PC-3 (cell line): ENCODE measurements at regions of chr1 and their contacts with region 1.

Region 1: DNA sequence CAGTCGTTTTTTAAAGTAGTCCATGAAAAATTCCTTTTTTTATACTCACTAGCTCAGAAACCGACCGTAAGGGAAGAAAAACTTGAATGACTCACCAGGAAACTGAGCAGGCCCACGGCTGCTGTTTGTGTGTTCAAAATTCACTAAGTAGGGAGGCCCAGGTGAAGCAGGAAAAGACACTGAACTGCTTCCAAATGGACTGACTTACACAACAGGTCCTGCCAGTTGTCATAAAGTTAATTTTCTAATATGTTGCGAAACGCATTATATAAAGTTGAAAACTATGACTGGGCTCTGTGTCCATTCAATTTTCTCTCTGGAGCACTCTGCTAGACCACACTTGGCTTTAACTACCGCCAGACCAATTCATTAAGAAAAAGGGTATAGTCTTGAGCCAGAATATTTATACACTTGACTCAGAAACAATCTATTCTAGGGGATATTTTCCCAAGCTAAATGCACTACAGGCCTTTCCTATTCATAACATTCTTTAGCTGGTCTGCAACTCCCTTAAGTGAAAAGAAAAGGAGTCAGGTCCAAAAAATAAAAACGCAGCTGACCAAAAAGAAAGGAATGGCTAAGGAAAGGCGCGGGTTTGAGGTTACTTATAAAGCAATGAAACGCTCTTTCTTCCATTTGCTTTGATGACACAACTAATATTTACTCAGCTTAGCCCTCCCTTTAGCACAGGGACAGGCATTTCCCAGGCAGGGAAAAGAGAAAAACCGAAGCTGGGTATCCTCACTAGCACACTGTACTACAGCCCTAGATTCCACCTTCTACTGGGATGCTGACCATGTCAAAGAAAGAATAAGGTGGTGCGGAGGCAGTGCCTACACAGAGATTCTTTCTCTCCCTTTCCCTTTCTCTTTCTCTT is 306.3 kb upstream of the ESRRG start:
- DNase-seq: peak; percentile 99
- ATAC-seq: peak; percentile 94
- H3K4me3 ChIP-seq: peak overlapping the region; percentile 55
- H3K27ac ChIP-seq: peak overlapping the region; percentile 91
- H3K4me1 ChIP-seq: peaks cover 46% of the 10 kb centered on the region
- H3K27me3 ChIP-seq: no peaks in the 10 kb centered on the region
- CTCF ChIP-seq: no peak

Region 2: DNA sequence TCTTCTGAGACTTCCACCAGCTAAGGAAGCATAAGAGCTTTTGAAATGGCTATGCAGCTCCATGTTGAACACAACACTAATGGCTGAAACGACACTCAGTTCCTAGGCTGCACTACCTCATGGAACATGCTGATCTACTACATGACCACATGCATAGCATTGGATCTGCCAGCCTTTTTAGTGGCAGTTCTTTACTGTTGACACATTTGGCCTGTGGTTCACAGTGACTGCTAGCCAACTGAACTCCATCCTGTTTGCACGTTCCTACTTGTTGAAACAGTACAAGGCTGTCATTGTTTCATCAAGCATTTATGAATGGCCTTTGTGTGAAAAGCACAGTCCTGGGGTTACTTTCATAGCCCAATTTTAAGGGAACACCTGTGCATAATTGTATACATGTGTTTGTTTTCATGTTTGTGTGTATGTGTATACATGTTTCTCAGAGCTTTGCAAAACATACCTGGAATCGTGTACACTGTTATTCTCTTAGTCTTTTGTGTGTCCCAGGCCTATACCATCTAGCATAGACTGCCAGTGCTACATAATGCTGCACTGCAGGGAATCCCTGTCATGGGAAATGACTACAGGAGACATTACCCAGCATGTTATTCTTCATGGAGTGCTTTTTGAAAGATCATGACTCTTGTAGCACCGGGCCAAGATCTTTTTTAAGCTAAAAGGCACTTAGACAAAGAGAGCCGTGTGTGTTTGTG is 126.7 kb before region 1 on chr1:
- CTCF ChIA-PET with region 1: no interaction called
- POLR2A ChIA-PET with region 1: no interaction called
- intact Hi-C with region 1: loop called (anchors 5 kb)
- DNase-seq: peak; percentile 84
- ATAC-seq: peak; percentile 82
- H3K4me3 ChIP-seq: no peak overlapping the region
- H3K27ac ChIP-seq: peak overlapping the region; percentile 41
- H3K4me1 ChIP-seq: peaks cover 19% of the 10 kb centered on the region
- H3K27me3 ChIP-seq: no peaks in the 10 kb centered on the region
- CTCF ChIP-seq: no peak

Region 3: DNA sequence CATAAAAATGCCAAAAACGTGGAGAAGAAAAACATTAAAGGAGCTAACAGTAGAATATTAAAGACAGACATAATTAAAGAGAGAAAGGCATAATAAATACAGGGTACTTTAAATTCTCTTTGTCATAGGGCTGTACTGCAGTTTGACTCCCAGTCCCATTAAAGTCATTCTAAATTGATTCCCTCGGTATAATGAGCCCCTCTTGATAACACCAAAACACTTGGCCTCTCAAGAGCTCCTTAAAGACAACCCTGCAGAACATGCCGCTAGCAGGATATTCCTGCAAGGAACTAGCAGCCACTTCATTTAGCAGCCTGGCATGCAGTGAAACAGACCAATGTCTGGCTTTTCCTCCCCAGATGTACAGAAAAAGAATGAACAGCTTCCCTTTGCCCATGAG is 32.5 kb before region 1 on chr1:
- CTCF ChIA-PET with region 1: no interaction called
- POLR2A ChIA-PET with region 1: no interaction called
- intact Hi-C with region 1: loop called (anchors 1 kb)
- DNase-seq: no peak
- ATAC-seq: no peak
- H3K4me3 ChIP-seq: no peak overlapping the region
- H3K27ac ChIP-seq: no peak overlapping the region
- H3K4me1 ChIP-seq: no peaks in the 10 kb centered on the region
- H3K27me3 ChIP-seq: no peaks in the 10 kb centered on the region
- CTCF ChIP-seq: no peak

Region 4: DNA sequence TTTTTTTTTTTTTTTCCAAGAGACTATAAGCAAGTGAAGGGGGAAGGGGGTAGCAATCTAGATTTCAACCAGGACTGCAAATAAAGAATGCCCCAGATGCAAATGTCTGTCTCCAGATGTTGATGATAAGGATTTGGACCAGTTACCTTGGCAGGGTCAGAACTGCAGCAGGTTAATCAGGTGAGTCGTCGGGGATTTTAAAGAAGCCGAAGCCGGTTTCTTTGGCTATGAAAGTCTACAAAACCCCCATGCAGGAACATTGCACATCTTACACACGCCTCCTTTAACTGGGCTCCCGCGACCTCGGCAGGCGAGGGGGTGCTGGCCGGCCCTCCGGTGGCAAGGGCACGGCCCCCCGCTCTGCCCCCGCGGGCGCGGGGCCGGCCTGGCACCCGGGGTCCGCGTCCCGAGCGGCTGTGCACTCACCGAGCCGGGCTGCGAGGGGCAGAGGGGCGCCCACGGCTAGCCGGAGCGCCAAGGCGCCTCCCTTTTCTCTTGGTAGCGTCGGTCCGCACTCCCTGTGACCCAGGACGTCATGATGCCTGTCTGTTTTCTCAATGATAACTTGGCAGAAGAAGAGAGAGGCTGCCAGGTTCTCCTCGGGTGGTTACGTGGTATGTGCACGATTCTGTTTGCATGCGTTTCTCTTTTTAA is 60.0 kb after region 1 on chr1:
- CTCF ChIA-PET with region 1: no interaction called
- POLR2A ChIA-PET with region 1: no interaction called
- intact Hi-C with region 1: loop called (anchors 1 kb)
- DNase-seq: peak; percentile 82
- ATAC-seq: peak; percentile 90
- H3K4me3 ChIP-seq: peak overlapping the region; percentile 84
- H3K27ac ChIP-seq: peak overlapping the region; percentile 54
- H3K4me1 ChIP-seq: peaks cover 17% of the 10 kb centered on the region
- H3K27me3 ChIP-seq: no peaks in the 10 kb centered on the region
- CTCF ChIP-seq: no peak

Region 5: GRCh38 chr1:217134857-217135568 is 105.5 kb after region 1 on chr1:
- CTCF ChIA-PET with region 1: no interaction called
- POLR2A ChIA-PET with region 1: no interaction called
- intact Hi-C with region 1: no loop called
- DNase-seq: peak; percentile 38
- ATAC-seq: peak; percentile 66
- H3K4me3 ChIP-seq: peak overlapping the region; percentile 69
- H3K27ac ChIP-seq: no peak overlapping the region
- H3K4me1 ChIP-seq: no peaks in the 10 kb centered on the region; the same call in 1 of the 2 replicates
- H3K27me3 ChIP-seq: peaks cover 19% of the 10 kb centered on the region; the same call in 1 of the 2 replicates
- CTCF ChIP-seq: no peak

Region 6: GRCh38 chr1:217275655-217276398 is 246.3 kb after region 1 on chr1:
- CTCF ChIA-PET with region 1: no interaction called
- POLR2A ChIA-PET with region 1: no interaction called
- intact Hi-C with region 1: loop called (anchors 1 kb)
- DNase-seq: peak; percentile 96
- ATAC-seq: peak; percentile 67
- H3K4me3 ChIP-seq: peak overlapping the region; percentile 50
- H3K27ac ChIP-seq: peak overlapping the region; percentile 92
- H3K4me1 ChIP-seq: peaks cover 48% of the 10 kb centered on the region
- H3K27me3 ChIP-seq: no peaks in the 10 kb centered on the region
- CTCF ChIP-seq: no peak

Region 7: GRCh38 chr1:217333939-217334338 is 304.4 kb after region 1 on chr1:
- CTCF ChIA-PET with region 1: interaction called, 8 read pairs
- POLR2A ChIA-PET with region 1: no interaction called
- intact Hi-C with region 1: loop called (anchors 5 kb)
- DNase-seq: peak; percentile 89
- ATAC-seq: peak; percentile 77
- H3K4me3 ChIP-seq: no peak overlapping the region
- H3K27ac ChIP-seq: no peak overlapping the region
- H3K4me1 ChIP-seq: no peaks in the 10 kb centered on the region
- H3K27me3 ChIP-seq: peaks cover 5% of the 10 kb centered on the region; the same call in 1 of the 2 replicates
- CTCF ChIP-seq: peak; percentile 98

Region 8: DNA sequence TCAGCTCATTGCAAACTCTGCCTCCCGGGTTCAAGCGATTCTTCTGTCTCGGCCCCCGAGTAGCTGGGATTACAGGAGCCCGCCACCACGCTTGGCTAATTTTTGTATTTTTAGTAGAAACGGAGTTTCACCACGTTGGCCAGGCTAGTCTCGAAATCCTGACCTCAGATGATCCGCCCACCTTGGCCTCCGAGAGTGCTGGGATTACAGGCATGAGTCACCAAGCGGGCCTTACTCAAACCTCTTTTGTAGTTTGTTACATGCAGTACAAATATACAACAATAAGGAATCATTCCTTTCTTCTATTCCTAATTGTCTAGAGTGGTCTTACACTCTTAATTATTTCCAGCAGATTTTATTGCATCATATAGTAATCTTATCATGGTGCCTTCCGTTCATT is 618.3 kb after region 1 on chr1:
- CTCF ChIA-PET with region 1: no interaction called
- POLR2A ChIA-PET with region 1: no interaction called
- intact Hi-C with region 1: no loop called
- DNase-seq: peak; percentile 9
- ATAC-seq: no peak
- H3K4me3 ChIP-seq: no peak overlapping the region
- H3K27ac ChIP-seq: no peak overlapping the region
- H3K4me1 ChIP-seq: no peaks in the 10 kb centered on the region
- H3K27me3 ChIP-seq: no peaks in the 10 kb centered on the region
- CTCF ChIP-seq: no peak